Naive thymus-derived CD4-positive, alpha-beta T cell (primary cell): ENCODE measurements at regions of chr1 and their contacts with region 1.

Region 1: GRCh38 chr1:91500756-91501522 is at the start of gene CDC7:
- DNase-seq: peak; percentile 67 to 86 (median 79)
- ATAC-seq: peak; percentile 85
- H3K4me3 ChIP-seq: peak within 1 kb of the TSS; percentile 97
- H3K4me3 Mint-ChIP-seq: no peak within 1 kb of the TSS
- H3K27ac ChIP-seq: peak within 1 kb of the TSS; percentile 85
- H3K27ac Mint-ChIP-seq: no peak within 1 kb of the TSS
- H3K4me1 ChIP-seq: peaks cover 0 to 11% of the 10 kb centered on the region in 2 donors
- H3K4me1 Mint-ChIP-seq: peaks cover 14 to 34% (median 18%) of the 10 kb centered on the region in 7 donors
- H3K27me3 ChIP-seq: no peaks in the 10 kb centered on the region
- H3K27me3 Mint-ChIP-seq: no peaks in the 10 kb centered on the region
- total RNA-seq, gene CDC7: 5.3 to 17.9 (median 5.9) TPM

Region 2: DNA sequence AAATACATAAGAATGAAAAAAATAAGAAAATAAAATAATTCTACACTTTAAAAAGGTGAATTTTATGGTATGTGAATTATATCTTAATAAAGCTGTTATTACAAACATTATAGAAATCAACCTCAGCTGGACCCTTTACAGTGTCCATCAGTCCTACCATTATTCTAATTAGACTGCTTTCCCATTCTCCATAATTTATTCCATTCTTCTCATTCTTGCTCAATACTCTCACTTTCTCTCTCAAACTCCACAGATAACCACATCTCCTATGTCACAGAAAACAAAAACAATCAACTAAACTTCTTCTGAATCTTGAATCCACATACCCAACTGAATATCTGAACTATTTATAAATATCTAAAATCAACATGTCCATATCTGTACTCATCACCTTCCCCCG is 107.9 kb before region 1 on chr1:
- CTCF ChIA-PET with region 1: no interaction called
- POLR2A ChIA-PET with region 1: no interaction called
- intact Hi-C with region 1: no loop called
- DNase-seq: no peak
- ATAC-seq: no peak
- H3K4me3 ChIP-seq: no peak overlapping the region
- H3K4me3 Mint-ChIP-seq: no peak overlapping the region
- H3K27ac ChIP-seq: no peak overlapping the region
- H3K27ac Mint-ChIP-seq: no peak overlapping the region
- H3K4me1 ChIP-seq: no peaks in the 10 kb centered on the region
- H3K4me1 Mint-ChIP-seq: no peaks in the 10 kb centered on the region
- H3K27me3 ChIP-seq: no peaks in the 10 kb centered on the region
- H3K27me3 Mint-ChIP-seq: peaks cover 6 to 20% (median 12%) of the 10 kb centered on the region in 5 donors

Region 3: GRCh38 chr1:91404151-91405012 is 96.6 kb before region 1 on chr1 and contains the start of gene HFM1:
- CTCF ChIA-PET with region 1: no interaction called
- POLR2A ChIA-PET with region 1: no interaction called
- intact Hi-C with region 1: loop called in 1 of 2 experiments (anchors 2 kb)
- DNase-seq: peak; percentile 12 to 48 (median 38)
- ATAC-seq: peak; percentile 90
- H3K4me3 ChIP-seq: peak within 1 kb of the TSS; percentile 16
- H3K4me3 Mint-ChIP-seq: peak within 1 kb of the TSS; percentile 68 to 85 (median 79)
- H3K27ac ChIP-seq: peak within 1 kb of the TSS; percentile 29
- H3K27ac Mint-ChIP-seq: peak within 1 kb of the TSS in 4 of 9 donors; percentile 14 to 92 (median 36)
- H3K4me1 ChIP-seq: peaks cover 0 to 6% of the 10 kb centered on the region in 2 donors
- H3K4me1 Mint-ChIP-seq: peaks cover 0 to 14% (median 7%) of the 10 kb centered on the region in 7 donors
- H3K27me3 ChIP-seq: peaks cover 0 to 3% of the 10 kb centered on the region in 2 donors
- H3K27me3 Mint-ChIP-seq: peaks cover 27 to 74% (median 57%) of the 10 kb centered on the region in 5 donors
- total RNA-seq, gene HFM1: not detected

Region 4: DNA sequence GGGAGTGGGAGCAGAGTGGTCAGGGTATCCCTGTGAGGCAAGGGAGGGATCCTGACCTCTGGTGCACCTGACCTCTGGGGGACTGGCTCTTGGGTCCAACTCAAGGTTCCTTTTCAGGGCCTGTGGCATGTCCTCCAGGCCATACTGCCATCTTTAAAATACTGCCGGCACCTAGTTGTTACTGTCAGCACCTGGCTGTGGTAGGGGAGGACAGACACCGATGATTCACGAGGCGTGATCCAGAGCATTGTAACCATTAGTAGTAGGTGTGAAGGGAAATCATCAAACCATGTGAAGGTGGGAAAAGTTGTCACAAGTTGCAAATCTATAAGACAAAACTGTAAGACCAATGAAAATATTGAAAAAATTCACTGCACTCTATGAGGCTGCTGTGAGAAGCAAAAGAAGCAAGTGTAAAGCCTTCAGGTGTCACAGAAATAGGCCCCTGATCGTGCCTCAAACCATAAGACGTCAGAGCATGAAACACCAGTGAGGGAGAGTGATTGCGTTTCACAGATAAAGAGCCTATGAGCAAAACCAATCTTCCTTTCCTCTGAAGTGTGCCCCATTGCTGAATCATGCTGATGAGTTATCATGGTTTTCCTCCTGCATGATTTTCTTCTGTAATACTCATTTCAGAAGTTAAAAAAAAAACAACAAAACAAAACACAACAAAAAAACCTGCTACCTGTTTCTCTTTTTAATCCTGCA is 55.0 kb after region 1 on chr1:
- CTCF ChIA-PET with region 1: no interaction called
- POLR2A ChIA-PET with region 1: no interaction called
- intact Hi-C with region 1: loop called in 1 of 2 experiments (anchors 1 kb)
- DNase-seq: peak in 8 of 9 donors; percentile 56 to 86 (median 76)
- ATAC-seq: peak; percentile 93
- H3K4me3 ChIP-seq: no peak overlapping the region
- H3K4me3 Mint-ChIP-seq: peak overlapping the region in 7 of 10 donors; percentile 12 to 63 (median 45)
- H3K27ac ChIP-seq: peak overlapping the region; percentile 29
- H3K27ac Mint-ChIP-seq: peak overlapping the region; percentile 50 to 97 (median 85)
- H3K4me1 ChIP-seq: peaks cover 35 to 94% of the 10 kb centered on the region in 2 donors
- H3K4me1 Mint-ChIP-seq: peaks cover 41 to 92% (median 57%) of the 10 kb centered on the region in 7 donors
- H3K27me3 ChIP-seq: no peaks in the 10 kb centered on the region
- H3K27me3 Mint-ChIP-seq: peaks cover 0 to 3% (median 0%) of the 10 kb centered on the region in 5 donors

Region 5: GRCh38 chr1:91697416-91697815 is 196.5 kb after region 1 on chr1:
- CTCF ChIA-PET with region 1: no interaction called
- POLR2A ChIA-PET with region 1: no interaction called
- intact Hi-C with region 1: loop called in 1 of 2 experiments (anchors 1 kb)
- DNase-seq: peak in 8 of 9 donors; percentile 52 to 73 (median 60)
- ATAC-seq: peak; percentile 88
- H3K4me3 ChIP-seq: peak overlapping the region; percentile 45
- H3K4me3 Mint-ChIP-seq: peak overlapping the region; percentile 25 to 88 (median 57)
- H3K27ac ChIP-seq: peak overlapping the region; percentile 35
- H3K27ac Mint-ChIP-seq: peak overlapping the region; percentile 39 to 90 (median 83)
- H3K4me1 ChIP-seq: peaks cover 14 to 18% of the 10 kb centered on the region in 2 donors
- H3K4me1 Mint-ChIP-seq: peaks cover 19 to 43% (median 37%) of the 10 kb centered on the region in 7 donors
- H3K27me3 ChIP-seq: no peaks in the 10 kb centered on the region
- H3K27me3 Mint-ChIP-seq: no peaks in the 10 kb centered on the region

Region 6: DNA sequence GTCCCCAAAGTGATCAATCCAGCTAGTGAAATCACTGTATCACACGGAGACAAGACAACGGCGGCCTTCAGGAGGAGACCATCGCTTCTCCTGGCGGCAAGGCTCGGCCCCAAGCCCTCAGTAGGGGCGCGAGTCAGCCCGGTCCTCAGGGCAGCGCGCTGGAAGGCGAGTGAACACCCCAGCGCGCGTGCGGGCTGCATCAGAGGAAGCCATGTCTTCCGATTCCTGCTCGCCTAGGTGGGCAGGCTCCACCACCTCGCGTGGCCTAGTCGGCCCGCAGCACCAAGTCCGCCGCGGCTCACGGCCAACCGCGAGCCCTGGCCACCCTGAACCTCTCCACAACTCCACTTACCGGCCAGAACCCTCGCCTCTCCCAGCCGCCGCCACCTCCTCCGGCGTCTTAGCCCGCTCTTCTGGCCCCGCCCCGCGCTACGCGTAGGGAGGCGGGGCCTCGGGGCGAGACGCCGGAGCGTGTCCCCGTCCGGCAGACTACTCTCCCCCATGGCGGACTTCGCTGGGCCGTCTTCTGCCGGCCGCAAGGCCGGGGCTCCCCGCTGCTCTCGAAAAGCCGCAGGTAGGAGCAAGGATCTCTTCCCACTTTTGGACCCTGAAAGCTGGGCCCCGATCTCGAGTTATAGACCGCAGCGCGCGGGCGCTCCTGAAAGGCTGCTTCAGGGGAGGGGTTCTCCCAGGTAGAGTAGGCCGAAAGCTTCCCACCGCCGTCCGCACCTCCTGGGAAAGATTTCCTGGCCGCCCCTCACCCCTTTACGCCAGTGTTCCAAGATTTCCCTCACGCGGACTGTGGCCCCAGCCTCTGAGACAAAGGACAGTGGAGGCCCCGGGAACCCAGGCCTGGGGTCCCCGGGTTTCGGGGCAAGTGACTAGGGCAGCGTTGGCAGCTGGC is 797.9 kb after region 1 on chr1 and contains the starts of genes GLMN and RPAP2:
- CTCF ChIA-PET with region 1: interaction called, 4 read pairs
- POLR2A ChIA-PET with region 1: no interaction called
- intact Hi-C with region 1: loop called (anchors 5 kb)
- DNase-seq: peak; percentile 55 to 86 (median 75)
- ATAC-seq: peak; percentile 97
- H3K4me3 ChIP-seq: peak within 1 kb of the TSS; percentile 93
- H3K4me3 Mint-ChIP-seq: peak within 1 kb of the TSS; percentile 93 to 99 (median 97)
- H3K27ac ChIP-seq: peak within 1 kb of the TSS; percentile 98
- H3K27ac Mint-ChIP-seq: peak within 1 kb of the TSS; percentile 91 to 99 (median 97)
- H3K4me1 ChIP-seq: peaks cover 10 to 19% of the 10 kb centered on the region in 2 donors
- H3K4me1 Mint-ChIP-seq: peaks cover 30 to 61% (median 48%) of the 10 kb centered on the region in 7 donors
- H3K27me3 ChIP-seq: no peaks in the 10 kb centered on the region
- H3K27me3 Mint-ChIP-seq: no peaks in the 10 kb centered on the region
- total RNA-seq, gene GLMN: 13.9 to 27.0 (median 14.3) TPM
- total RNA-seq, gene RPAP2: 29.5 to 50.7 (median 42.3) TPM

Region 7: DNA sequence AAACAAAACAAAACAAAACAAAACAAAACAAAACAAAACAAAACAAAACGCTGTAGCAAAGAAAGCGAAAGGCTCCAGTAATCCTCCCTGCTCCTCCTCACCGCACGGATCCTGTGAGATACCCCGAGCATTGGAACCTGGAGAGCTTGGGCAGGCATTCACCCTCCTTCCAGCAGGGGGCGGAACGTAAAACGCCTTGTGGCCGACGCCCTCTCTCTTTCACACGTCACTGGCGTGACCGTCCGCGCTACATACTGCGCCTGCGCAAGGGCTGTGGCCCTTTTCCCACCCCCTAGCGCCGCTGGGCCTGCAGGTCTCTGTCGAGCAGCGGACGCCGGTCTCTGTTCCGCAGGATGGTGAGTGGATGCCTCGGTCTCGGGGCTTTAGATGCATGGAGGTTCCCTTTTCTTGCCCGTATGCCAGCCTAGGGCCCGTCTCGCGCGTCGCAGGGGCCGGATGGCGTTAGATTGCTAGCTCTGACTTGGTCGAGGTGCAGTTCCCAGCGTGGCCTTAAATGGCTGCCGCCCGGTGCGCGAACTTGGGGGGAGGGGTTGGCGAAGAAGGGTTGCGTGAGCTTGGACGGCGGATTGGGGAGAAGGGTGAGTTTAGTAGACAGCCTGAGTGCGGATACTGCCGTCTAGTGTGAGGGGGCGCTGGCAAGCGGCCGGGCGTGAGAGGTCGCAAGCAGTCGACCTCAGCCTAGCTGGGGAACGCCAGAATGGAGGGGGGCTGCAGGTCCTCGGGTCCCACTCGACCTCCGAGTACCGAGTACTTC is 1331.0 kb after region 1 on chr1 and contains the start of gene RPL5:
- CTCF ChIA-PET with region 1: no interaction called
- POLR2A ChIA-PET with region 1: no interaction called
- intact Hi-C with region 1: loop called in 1 of 2 experiments (anchors 5 kb)
- DNase-seq: peak; percentile 94 to 99 (median 98)
- ATAC-seq: peak; percentile 95
- H3K4me3 ChIP-seq: peak within 1 kb of the TSS; percentile 94
- H3K4me3 Mint-ChIP-seq: peak within 1 kb of the TSS; percentile 94 to 100 (median 98)
- H3K27ac ChIP-seq: peak within 1 kb of the TSS; percentile 94
- H3K27ac Mint-ChIP-seq: peak within 1 kb of the TSS; percentile 98 to 100 (median 99)
- H3K4me1 ChIP-seq: peaks cover 16 to 30% of the 10 kb centered on the region in 2 donors
- H3K4me1 Mint-ChIP-seq: peaks cover 29 to 54% (median 44%) of the 10 kb centered on the region in 7 donors
- H3K27me3 ChIP-seq: no peaks in the 10 kb centered on the region
- H3K27me3 Mint-ChIP-seq: peaks cover 0 to 5% (median 0%) of the 10 kb centered on the region in 5 donors
- total RNA-seq, gene RPL5: 764 to 1,693 (median 1,596) TPM